ENCODE measurements at regions of chr2 and their contacts with region 1.

Region 1: GRCh38 chr2:42095923-42096408 is 48.1 kb downstream of the PKDCC start:
- DNase-seq: peak; percentile 52 to 86 (median 79)
- ATAC-seq: peak; percentile 70
- H3K4me3 ChIP-seq: no peak overlapping the region
- H3K4me3 Mint-ChIP-seq: no peak overlapping the region
- H3K27ac ChIP-seq: no peak overlapping the region
- H3K27ac Mint-ChIP-seq: no peak overlapping the region
- H3K4me1 ChIP-seq: peaks cover 37% of the 10 kb centered on the region
- H3K4me1 Mint-ChIP-seq: peaks cover 43% of the 10 kb centered on the region
- H3K27me3 ChIP-seq: no peaks in the 10 kb centered on the region
- H3K27me3 Mint-ChIP-seq: no peaks in the 10 kb centered on the region
- CTCF ChIP-seq: peak; percentile 84

Region 2: GRCh38 chr2:41393621-41394020 is 702.3 kb before region 1 on chr2:
- CTCF ChIA-PET with region 1: no interaction called
- POLR2A ChIA-PET with region 1: no interaction called
- intact Hi-C with region 1: no loop called
- DNase-seq: no peak
- ATAC-seq: no peak
- H3K4me3 ChIP-seq: no peak overlapping the region
- H3K4me3 Mint-ChIP-seq: no peak overlapping the region
- H3K27ac ChIP-seq: no peak overlapping the region
- H3K27ac Mint-ChIP-seq: no peak overlapping the region
- H3K4me1 ChIP-seq: no peaks in the 10 kb centered on the region
- H3K4me1 Mint-ChIP-seq: no peaks in the 10 kb centered on the region
- H3K27me3 ChIP-seq: no peaks in the 10 kb centered on the region
- H3K27me3 Mint-ChIP-seq: no peaks in the 10 kb centered on the region
- CTCF ChIP-seq: no peak

Region 3: DNA sequence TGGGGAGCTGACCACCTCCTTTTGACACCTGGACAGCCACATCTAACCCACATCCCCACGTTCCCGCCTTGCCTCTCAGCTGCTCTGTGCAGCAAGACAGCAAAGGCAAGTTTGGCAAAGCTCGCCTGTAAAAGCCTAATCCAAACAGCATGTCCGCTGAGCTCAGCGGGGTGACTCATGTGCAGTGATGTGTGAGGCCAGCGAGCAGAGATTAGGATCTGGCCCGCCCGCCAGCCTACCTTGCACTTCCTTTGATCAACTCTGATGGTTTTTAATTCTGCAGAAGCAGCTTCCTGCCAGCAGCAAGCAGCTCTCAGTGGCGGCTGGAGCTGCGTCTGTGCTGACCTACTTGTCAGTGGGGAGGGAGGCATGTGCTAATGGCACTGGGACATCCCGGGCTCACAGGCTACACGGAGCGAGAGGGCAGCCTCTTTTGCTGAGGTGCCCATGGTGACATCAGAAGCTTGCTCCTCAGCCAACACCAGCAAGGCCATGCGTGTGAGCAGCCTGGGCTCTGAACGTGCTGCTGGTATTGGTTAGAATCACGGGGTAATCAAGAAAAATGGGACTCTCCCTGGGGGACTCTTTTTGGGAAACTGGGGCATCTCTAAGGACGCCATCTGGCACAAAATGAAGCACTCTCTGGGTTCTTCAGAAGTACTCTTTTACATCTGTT is 37.1 kb after region 1 on chr2:
- CTCF ChIA-PET with region 1: interaction called, 52 read pairs
- POLR2A ChIA-PET with region 1: interaction called, 7 read pairs
- intact Hi-C with region 1: no loop called
- DNase-seq: peak; percentile 83 to 97 (median 90)
- ATAC-seq: peak; percentile 88
- H3K4me3 ChIP-seq: peak overlapping the region; percentile 6 to 22
- H3K4me3 Mint-ChIP-seq: peak overlapping the region; percentile 76
- H3K27ac ChIP-seq: peak overlapping the region; percentile 61 to 90
- H3K27ac Mint-ChIP-seq: peak overlapping the region; percentile 98
- H3K4me1 ChIP-seq: peaks cover 80% of the 10 kb centered on the region
- H3K4me1 Mint-ChIP-seq: peaks cover 85% of the 10 kb centered on the region
- H3K27me3 ChIP-seq: no peaks in the 10 kb centered on the region
- H3K27me3 Mint-ChIP-seq: no peaks in the 10 kb centered on the region
- CTCF ChIP-seq: no peak

Region 4: DNA sequence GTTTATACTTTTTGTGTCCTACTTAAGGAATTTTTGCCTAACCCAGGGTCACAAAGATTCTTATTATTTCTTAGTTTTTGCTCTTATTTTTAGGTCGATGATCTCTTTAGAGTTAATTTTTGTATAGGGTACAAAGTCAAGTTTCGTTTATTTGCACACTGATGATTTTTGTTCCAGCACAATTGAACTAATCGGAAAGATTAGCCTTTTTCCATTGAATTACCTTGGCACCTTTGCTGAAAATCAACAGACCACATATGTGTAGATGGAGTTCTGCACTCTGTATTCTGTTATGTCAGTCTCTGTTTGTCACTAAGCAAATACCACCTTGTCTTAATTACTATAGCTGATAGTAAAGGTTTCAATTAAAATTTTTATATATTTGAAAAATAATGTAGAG is 91.9 kb after region 1 on chr2:
- CTCF ChIA-PET with region 1: interaction called, 119 read pairs
- POLR2A ChIA-PET with region 1: interaction called, 3 read pairs
- intact Hi-C with region 1: no loop called
- DNase-seq: no peak
- ATAC-seq: no peak
- H3K4me3 ChIP-seq: no peak overlapping the region
- H3K4me3 Mint-ChIP-seq: no peak overlapping the region
- H3K27ac ChIP-seq: no peak overlapping the region
- H3K27ac Mint-ChIP-seq: no peak overlapping the region
- H3K4me1 ChIP-seq: peaks cover 50% of the 10 kb centered on the region
- H3K4me1 Mint-ChIP-seq: peaks cover 78% of the 10 kb centered on the region
- H3K27me3 ChIP-seq: no peaks in the 10 kb centered on the region
- H3K27me3 Mint-ChIP-seq: no peaks in the 10 kb centered on the region
- CTCF ChIP-seq: no peak

Region 5: GRCh38 chr2:42238644-42239288 is 142.8 kb after region 1 on chr2:
- CTCF ChIA-PET with region 1: interaction called, 41 read pairs
- POLR2A ChIA-PET with region 1: no interaction called
- intact Hi-C with region 1: loop called (anchors 1 kb)
- DNase-seq: peak in 7 of 9 experiments; percentile 10 to 60 (median 31)
- ATAC-seq: peak; percentile 56
- H3K4me3 ChIP-seq: no peak overlapping the region
- H3K4me3 Mint-ChIP-seq: no peak overlapping the region
- H3K27ac ChIP-seq: no peak overlapping the region
- H3K27ac Mint-ChIP-seq: no peak overlapping the region
- H3K4me1 ChIP-seq: peaks cover 40% of the 10 kb centered on the region
- H3K4me1 Mint-ChIP-seq: peaks cover 87% of the 10 kb centered on the region
- H3K27me3 ChIP-seq: no peaks in the 10 kb centered on the region
- H3K27me3 Mint-ChIP-seq: no peaks in the 10 kb centered on the region
- CTCF ChIP-seq: no peak

Region 6: GRCh38 chr2:42360890-42361727 is 265.1 kb after region 1 on chr2 and contains the start of gene COX7A2L:
- CTCF ChIA-PET with region 1: no interaction called
- POLR2A ChIA-PET with region 1: no interaction called
- intact Hi-C with region 1: loop called (anchors 2 to 5 kb)
- DNase-seq: peak; percentile 92 to 98 (median 96)
- ATAC-seq: peak; percentile 94
- H3K4me3 ChIP-seq: peak within 1 kb of the TSS; percentile 89 to 96
- H3K4me3 Mint-ChIP-seq: peak within 1 kb of the TSS; percentile 86
- H3K27ac ChIP-seq: peak within 1 kb of the TSS; percentile 85 to 96
- H3K27ac Mint-ChIP-seq: peak within 1 kb of the TSS; percentile 99
- H3K4me1 ChIP-seq: peaks cover 33% of the 10 kb centered on the region
- H3K4me1 Mint-ChIP-seq: peaks cover 54% of the 10 kb centered on the region
- H3K27me3 ChIP-seq: no peaks in the 10 kb centered on the region
- H3K27me3 Mint-ChIP-seq: no peaks in the 10 kb centered on the region
- CTCF ChIP-seq: no peak
- total RNA-seq, gene COX7A2L: 56.9 to 60.8 TPM

Region 7: DNA sequence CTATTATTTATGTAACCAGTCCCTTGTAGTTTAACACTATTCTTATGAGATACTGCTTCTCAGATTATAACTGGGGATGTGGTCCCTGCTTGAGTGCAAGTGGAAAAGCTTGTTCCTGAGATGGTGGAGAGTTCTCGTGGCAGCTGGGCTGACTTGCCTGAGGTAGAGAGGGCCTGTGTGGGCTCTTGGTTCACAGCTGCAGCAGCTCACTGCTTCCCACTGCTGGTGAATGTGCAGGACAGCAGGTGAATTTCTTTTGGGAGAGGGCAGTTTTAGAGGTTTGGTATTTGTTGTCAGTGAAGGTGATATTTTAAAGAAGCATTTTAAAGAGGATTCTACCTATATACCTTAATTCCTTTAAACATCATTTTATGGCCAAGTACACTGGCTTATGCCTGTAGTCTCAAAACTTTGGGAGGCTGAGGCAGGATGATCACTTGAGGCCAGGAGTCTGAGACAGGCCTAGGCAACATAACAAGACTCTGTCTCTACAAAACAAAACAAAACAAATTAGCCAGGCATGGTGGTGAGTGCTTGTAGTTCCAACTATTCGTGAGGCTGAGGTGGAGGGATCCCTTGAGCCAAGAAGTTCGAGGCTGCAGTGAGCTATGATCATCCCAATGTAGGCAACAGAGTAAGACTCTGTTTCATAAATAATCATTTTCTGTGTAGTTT is 567.3 kb after region 1 on chr2:
- CTCF ChIA-PET with region 1: no interaction called
- POLR2A ChIA-PET with region 1: no interaction called
- intact Hi-C with region 1: loop called (anchors 2 to 5 kb)
- DNase-seq: peak; percentile 24 to 84 (median 60)
- ATAC-seq: peak; percentile 100
- H3K4me3 ChIP-seq: no peak overlapping the region
- H3K4me3 Mint-ChIP-seq: peak overlapping the region; percentile 32
- H3K27ac ChIP-seq: no peak overlapping the region
- H3K27ac Mint-ChIP-seq: peak overlapping the region; percentile 85
- H3K4me1 ChIP-seq: peaks cover 10% of the 10 kb centered on the region
- H3K4me1 Mint-ChIP-seq: peaks cover 25% of the 10 kb centered on the region
- H3K27me3 ChIP-seq: no peaks in the 10 kb centered on the region
- H3K27me3 Mint-ChIP-seq: no peaks in the 10 kb centered on the region
- CTCF ChIP-seq: peak; percentile 91

Measured in CD8-positive, alpha-beta T cell (primary cell).